CD8-positive, alpha-beta T cell (primary cell): ENCODE measurements at regions of chr17 and their contacts with region 1.

Region 1: GRCh38 chr17:1399679-1400512 is at the start of gene YWHAE:
- DNase-seq: peak; percentile 87 to 97 (median 96)
- ATAC-seq: peak; percentile 86
- H3K4me3 ChIP-seq: peak within 1 kb of the TSS; percentile 100
- H3K4me3 Mint-ChIP-seq: peak within 1 kb of the TSS; percentile 99
- H3K27ac ChIP-seq: peak within 1 kb of the TSS; percentile 94 to 98
- H3K27ac Mint-ChIP-seq: peak within 1 kb of the TSS; percentile 98
- H3K4me1 ChIP-seq: peaks cover 25% of the 10 kb centered on the region
- H3K4me1 Mint-ChIP-seq: peaks cover 41% of the 10 kb centered on the region
- H3K27me3 ChIP-seq: no peaks in the 10 kb centered on the region
- H3K27me3 Mint-ChIP-seq: no peaks in the 10 kb centered on the region
- CTCF ChIP-seq: no peak
- total RNA-seq, gene YWHAE: 125 to 134 TPM

Region 2: GRCh38 chr17:1203111-1203966 is 196.6 kb before region 1 on chr17:
- CTCF ChIA-PET with region 1: no interaction called
- POLR2A ChIA-PET with region 1: interaction called, 11 read pairs
- intact Hi-C with region 1: no loop called
- DNase-seq: peak; percentile 30 to 78 (median 52)
- ATAC-seq: peak; percentile 66
- H3K4me3 ChIP-seq: peak overlapping the region in 1 of 2 experiments; percentile 35
- H3K4me3 Mint-ChIP-seq: peak overlapping the region; percentile 5
- H3K27ac ChIP-seq: no peak overlapping the region
- H3K27ac Mint-ChIP-seq: no peak overlapping the region
- H3K4me1 ChIP-seq: peaks cover 48% of the 10 kb centered on the region
- H3K4me1 Mint-ChIP-seq: peaks cover 34% of the 10 kb centered on the region
- H3K27me3 ChIP-seq: no peaks in the 10 kb centered on the region
- H3K27me3 Mint-ChIP-seq: no peaks in the 10 kb centered on the region
- CTCF ChIP-seq: no peak

Region 3: GRCh38 chr17:1344521-1344920 is 55.4 kb before region 1 on chr17:
- CTCF ChIA-PET with region 1: no interaction called
- POLR2A ChIA-PET with region 1: no interaction called
- intact Hi-C with region 1: no loop called
- DNase-seq: no peak
- ATAC-seq: no peak
- H3K4me3 ChIP-seq: no peak overlapping the region
- H3K4me3 Mint-ChIP-seq: no peak overlapping the region
- H3K27ac ChIP-seq: no peak overlapping the region
- H3K27ac Mint-ChIP-seq: no peak overlapping the region
- H3K4me1 ChIP-seq: peaks cover 8% of the 10 kb centered on the region
- H3K4me1 Mint-ChIP-seq: peaks cover 21% of the 10 kb centered on the region
- H3K27me3 ChIP-seq: no peaks in the 10 kb centered on the region
- H3K27me3 Mint-ChIP-seq: no peaks in the 10 kb centered on the region
- CTCF ChIP-seq: no peak

Region 4: DNA sequence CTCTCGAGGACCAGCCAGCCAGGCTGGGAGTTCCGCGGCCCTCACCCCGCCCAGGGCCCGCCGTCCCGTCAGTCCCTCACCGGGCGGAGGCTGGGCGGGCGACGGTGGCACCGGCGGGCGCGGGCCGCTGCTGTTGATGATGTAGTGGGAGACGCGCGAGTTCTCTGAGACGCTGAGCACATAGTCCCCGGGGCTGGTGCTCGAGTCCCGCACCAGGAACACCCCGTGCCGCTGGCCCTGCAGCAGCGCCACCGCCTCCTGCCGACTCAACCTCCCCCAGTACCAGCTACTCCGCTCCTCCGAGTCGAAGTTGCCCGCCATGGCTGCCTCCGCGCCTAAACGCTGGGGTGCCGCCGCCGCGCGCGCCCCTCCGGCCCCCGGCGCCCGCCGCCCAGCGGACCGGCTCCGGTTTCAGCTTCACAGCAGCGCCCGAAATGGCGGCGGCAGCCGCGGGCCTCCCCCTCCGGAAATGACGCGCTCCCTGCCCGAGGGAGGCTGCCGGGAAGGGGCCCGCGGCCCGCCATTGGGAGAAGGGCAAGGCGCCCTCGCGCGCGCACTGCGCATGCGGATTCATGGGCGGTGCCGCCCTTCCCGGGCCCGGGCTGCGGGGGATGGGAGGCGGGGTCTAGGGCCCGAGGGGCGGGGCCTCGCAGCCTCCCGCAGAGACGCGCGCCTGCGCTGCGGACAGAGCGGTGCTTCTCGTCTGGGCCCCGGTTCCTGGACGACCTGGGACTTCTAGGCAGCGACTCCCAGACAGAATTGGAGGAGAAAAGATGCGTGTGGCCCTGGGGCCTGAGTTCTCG is 56.1 kb after region 1 on chr17 and contains the start of gene CRK:
- CTCF ChIA-PET with region 1: no interaction called
- POLR2A ChIA-PET with region 1: interaction called, 5 read pairs
- intact Hi-C with region 1: loop called (anchors 1 kb)
- DNase-seq: peak; percentile 95 to 100 (median 99)
- ATAC-seq: peak; percentile 95
- H3K4me3 ChIP-seq: peak within 1 kb of the TSS; percentile 80 to 94
- H3K4me3 Mint-ChIP-seq: peak within 1 kb of the TSS; percentile 92
- H3K27ac ChIP-seq: peak within 1 kb of the TSS; percentile 92 to 93
- H3K27ac Mint-ChIP-seq: peak within 1 kb of the TSS; percentile 91
- H3K4me1 ChIP-seq: peaks cover 43% of the 10 kb centered on the region
- H3K4me1 Mint-ChIP-seq: peaks cover 46% of the 10 kb centered on the region
- H3K27me3 ChIP-seq: peaks cover 0 to 10% of the 10 kb centered on the region in 2 experiments
- H3K27me3 Mint-ChIP-seq: peaks cover 10% of the 10 kb centered on the region
- CTCF ChIP-seq: no peak
- total RNA-seq, gene CRK: 15.4 to 15.9 TPM

Region 5: DNA sequence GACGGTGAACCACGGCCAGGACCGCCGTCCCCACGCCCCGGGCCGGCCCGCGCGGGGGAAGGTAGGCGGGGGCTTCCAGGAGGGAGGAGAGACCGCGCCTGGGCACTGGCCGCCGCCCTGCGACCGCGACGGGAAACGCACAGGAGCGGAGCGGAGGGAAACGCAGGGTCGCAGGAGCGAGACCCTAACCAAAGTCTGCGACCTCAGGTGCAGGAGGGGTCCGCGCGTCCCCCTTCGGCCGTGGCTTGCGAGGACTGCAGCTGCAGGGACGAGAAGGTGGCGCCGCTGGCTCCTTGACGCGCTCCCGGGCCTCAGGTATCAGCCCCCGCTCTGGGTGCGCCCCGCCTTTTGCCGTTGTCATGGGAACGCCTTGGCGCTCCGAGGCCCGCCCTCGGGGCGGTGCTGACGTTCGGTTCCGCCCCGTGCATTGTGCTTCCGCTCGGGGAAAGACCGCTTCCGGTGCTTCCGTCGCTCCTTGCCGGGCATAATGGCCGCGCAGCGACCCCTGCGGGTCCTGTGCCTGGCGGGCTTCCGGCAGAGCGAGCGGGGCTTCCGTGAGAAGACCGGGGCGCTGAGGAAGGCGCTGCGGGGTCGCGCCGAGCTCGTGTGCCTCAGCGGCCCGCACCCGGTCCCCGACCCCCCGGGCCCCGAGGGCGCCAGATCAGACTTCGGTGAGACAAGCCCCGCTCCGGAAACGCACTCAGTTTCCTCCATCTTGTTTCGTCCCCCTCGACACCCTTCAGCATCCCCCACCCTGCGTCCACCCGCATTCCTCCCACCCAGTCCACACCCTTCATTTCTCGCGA is 641.9 kb after region 1 on chr17 and contains the start of gene OVCA2:
- CTCF ChIA-PET with region 1: no interaction called
- POLR2A ChIA-PET with region 1: no interaction called
- intact Hi-C with region 1: no loop called
- DNase-seq: peak; percentile 96 to 99 (median 97)
- ATAC-seq: peak; percentile 94
- H3K4me3 ChIP-seq: peak within 1 kb of the TSS; percentile 74 to 75
- H3K4me3 Mint-ChIP-seq: peak within 1 kb of the TSS; percentile 85
- H3K27ac ChIP-seq: peak within 1 kb of the TSS; percentile 77 to 89
- H3K27ac Mint-ChIP-seq: peak within 1 kb of the TSS; percentile 92
- H3K4me1 ChIP-seq: peaks cover 15% of the 10 kb centered on the region
- H3K4me1 Mint-ChIP-seq: peaks cover 20% of the 10 kb centered on the region
- H3K27me3 ChIP-seq: no peaks in the 10 kb centered on the region
- H3K27me3 Mint-ChIP-seq: no peaks in the 10 kb centered on the region
- CTCF ChIP-seq: peak; percentile 42
- total RNA-seq, gene OVCA2: 38.7 to 48.2 TPM